Posterior cingulate gyrus (tissue), 11 donors: ENCODE measurements at regions of chr1 and their contacts with region 1.

Region 1: GRCh38 chr1:154607609-154608396 is at the start of gene ADAR:
- DNase-seq: peak; percentile 57 to 93 (median 69)

Region 2: DNA sequence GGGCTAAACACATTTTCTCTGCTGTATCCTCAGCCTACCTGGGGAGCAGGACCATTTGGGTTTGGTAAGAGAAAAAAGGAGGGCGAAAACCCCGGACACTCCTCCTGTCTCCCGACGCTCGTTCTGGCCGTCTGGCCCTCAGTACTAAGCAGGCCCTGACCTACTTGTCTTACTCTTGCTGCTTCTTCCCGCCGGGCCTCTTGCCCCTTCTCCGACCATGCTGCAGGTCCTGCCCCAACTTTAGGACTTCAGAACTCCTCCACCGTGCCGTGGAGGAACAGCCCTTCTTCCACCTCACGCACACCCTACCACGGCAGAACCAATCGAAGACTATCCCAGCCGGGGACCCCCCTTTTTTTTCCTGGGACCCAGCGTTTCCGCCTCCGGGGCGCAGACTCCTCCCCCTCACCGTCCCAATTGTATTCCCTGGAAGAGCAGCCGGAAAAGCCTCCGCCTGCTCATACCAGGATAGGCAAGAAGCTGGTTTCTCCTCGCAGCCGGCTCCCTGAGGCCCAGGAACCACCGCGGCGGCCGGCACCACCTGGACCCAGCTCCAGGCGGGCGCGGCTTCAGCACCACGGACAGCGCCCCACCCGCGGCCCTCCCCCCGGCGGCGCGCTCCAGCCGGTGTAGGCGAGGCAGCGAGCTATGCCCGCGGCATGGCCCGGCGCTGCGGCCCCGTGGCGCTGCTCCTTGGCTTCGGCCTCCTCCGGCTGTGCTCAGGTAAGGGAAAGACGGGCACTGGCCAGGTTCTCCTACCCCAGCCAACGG is 40.2 kb before region 1 on chr1 and contains the start of gene CHRNB2:
- intact Hi-C with region 1: loop called (anchors 5 kb)
- DNase-seq: peak; percentile 52 to 94 (median 72)